A549 (cell line): ENCODE measurements at regions of chr5 and their contacts with region 1.

Region 1: GRCh38 chr5:174817610-174818009 is 93.2 kb downstream of the MSX2 start:
- DNase-seq: no peak
- ATAC-seq: no peak
- H3K4me3 ChIP-seq: no peak overlapping the region
- H3K27ac ChIP-seq: no peak overlapping the region
- H3K4me1 ChIP-seq: no peaks in the 10 kb centered on the region
- CTCF ChIP-seq: no peak
- EP300 ChIP-seq: no peak
- POLR2A ChIP-seq: no peak
- RAD21 ChIP-seq: no peak

Region 2: DNA sequence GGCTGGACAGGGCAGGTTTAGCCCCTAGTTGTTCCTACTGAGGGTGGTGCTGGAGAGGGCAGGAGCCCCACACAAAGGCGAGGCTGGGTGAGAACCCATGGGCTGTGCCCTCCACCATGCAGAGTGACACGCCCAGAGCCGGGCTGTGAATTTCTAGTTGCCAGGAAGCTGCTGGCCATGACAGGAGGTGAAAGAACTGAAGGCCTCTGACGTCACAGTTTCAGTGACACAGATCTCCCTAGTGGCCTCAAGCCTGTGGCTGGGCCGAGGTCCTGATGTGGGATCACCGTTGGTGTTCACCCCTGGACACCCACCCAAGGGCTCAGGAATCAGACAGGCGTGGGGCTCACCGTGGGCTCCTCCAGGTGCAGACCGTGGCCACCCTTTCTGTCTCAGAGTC is 53.3 kb before region 1 on chr5:
- CTCF ChIA-PET with region 1: no interaction called
- POLR2A ChIA-PET with region 1: no interaction called
- DNase-seq: no peak
- ATAC-seq: peak in 1 of 2 experiments; percentile 30; a peak in 2 of 6 replicates
- H3K4me3 ChIP-seq: no peak overlapping the region
- H3K27ac ChIP-seq: no peak overlapping the region
- H3K4me1 ChIP-seq: no peaks in the 10 kb centered on the region
- CTCF ChIP-seq: no peak
- EP300 ChIP-seq: no peak
- POLR2A ChIP-seq: no peak
- RAD21 ChIP-seq: no peak

Region 3: DNA sequence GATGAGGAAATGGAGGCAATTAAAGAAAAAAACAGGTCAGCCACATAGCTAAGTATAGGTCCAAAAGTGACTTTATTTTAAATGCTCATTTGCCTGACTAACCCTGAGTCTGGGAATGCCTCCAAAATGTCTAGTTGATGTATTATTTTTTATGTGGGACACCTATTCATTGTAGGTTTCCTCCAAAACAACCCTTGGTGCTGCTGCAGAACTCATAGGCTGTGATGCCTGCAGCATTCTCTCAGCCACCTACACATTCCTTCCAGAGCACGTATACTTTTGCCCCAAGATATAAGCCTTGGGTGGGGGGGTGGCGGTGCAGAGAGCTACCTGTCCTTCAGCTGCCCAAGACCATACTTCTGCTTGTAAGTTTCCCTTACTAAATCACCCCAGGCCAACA is 15.8 kb before region 1 on chr5:
- CTCF ChIA-PET with region 1: no interaction called
- POLR2A ChIA-PET with region 1: no interaction called
- DNase-seq: no peak
- ATAC-seq: no peak
- H3K4me3 ChIP-seq: no peak overlapping the region
- H3K27ac ChIP-seq: no peak overlapping the region
- H3K4me1 ChIP-seq: no peaks in the 10 kb centered on the region
- CTCF ChIP-seq: no peak
- EP300 ChIP-seq: no peak
- POLR2A ChIP-seq: no peak
- RAD21 ChIP-seq: no peak

Region 4: GRCh38 chr5:174837919-174838902 is 20.6 kb after region 1 on chr5:
- CTCF ChIA-PET with region 1: interaction called, 12 read pairs
- POLR2A ChIA-PET with region 1: no interaction called
- DNase-seq: peak; percentile 40 to 49
- ATAC-seq: peak; percentile 51 to 95
- H3K4me3 ChIP-seq: no peak overlapping the region
- H3K27ac ChIP-seq: no peak overlapping the region
- H3K4me1 ChIP-seq: peaks cover 7% of the 10 kb centered on the region; the same call in 1 of the 3 replicates
- CTCF ChIP-seq: peak; percentile 44
- EP300 ChIP-seq: 0 out of 5 replicates have a peak, but pooled peaks of 1 of the 2 experiments have one; percentile 37
- POLR2A ChIP-seq: no peak
- RAD21 ChIP-seq: peak; percentile 19 to 23; a peak in 3 of 5 replicates